MCF 10A (cell line): ENCODE measurements at regions of chr11 and their contacts with region 1.

Region 1: DNA sequence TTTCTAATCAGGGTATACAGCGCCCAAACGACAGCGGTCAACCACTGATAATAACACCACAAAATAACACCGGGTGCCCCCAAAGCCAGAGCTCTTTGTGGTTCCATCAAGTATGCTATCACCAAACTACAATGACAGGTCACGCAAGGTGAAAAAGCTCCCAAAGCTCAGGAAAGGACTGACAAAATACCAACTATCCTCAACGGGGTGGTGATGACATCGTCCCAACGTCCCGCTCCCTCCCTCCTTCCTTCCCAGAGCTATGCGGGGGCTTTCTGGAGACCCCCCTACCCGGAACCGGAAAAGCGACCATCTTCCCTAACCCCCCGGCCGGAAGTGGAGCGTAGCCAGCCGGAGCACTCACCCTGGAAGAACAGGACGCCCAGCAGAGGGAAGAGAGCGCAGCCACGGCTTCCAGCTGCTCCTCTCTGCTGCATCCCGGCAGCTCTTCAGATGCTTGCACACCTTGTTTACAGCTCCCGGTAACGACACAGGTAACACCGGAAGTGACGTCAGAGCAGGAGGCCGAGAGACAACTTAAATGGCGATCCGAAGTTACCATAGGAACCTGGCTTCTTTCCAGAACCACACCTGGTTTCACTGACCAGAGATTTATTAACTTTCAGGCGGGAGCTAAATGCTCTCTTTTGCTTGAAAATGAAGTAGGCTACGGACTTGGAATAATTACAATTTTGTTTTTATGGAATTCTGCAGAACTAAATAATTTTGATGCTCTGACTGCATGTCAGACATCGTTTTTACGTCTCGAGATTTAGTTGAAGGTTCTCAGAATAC is at the start of gene MPZL3:
- DNase-seq: peak; percentile 96
- H3K4me3 Mint-ChIP-seq: peak within 1 kb of the TSS; percentile 97
- H3K27ac Mint-ChIP-seq: peak within 1 kb of the TSS; percentile 99
- H3K4me1 Mint-ChIP-seq: peaks cover 18% of the 10 kb centered on the region
- H3K27me3 Mint-ChIP-seq: no peaks in the 10 kb centered on the region
- CTCF ChIP-seq: no peak
- total RNA-seq, gene MPZL3: 11.9 and 17.7 TPM in 2 replicates

Region 2: DNA sequence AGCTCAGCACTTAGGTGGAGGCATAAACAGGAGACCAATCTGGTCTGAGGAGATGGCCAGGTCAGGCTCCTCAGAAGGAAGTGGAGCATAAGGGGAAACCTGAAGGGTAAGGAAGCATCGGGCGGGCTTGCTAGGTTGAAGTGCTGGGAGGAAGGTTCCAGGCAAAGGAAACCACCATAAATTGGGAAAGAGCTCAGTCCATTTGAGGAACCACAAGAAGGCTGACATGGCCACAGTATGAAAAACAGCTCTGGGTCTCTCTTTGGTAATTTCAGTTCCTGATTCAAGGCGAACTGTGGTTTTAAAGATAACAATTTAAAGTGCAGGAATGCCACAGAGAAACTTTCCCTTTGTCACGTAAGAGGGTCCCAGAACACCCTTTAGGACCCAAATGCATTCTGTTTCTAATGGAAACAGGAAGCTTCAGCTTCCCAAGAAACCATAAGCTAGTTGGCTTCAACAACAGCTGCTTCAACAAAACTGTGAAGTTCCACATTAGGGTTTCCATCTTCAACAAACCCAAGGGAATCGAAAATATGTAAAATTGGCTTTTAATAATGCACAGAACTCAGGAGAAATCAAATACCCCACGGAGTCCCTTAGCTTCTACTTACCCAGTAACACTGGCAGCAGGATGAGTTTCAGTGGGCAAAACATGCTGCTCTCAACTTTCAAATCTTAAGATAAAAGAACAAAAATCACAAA is 37.7 kb before region 1 on chr11:
- CTCF ChIA-PET with region 1: no interaction called
- POLR2A ChIA-PET with region 1: interaction called, 11 read pairs
- intact Hi-C with region 1: no loop called
- DNase-seq: no peak
- H3K4me3 Mint-ChIP-seq: no peak overlapping the region
- H3K27ac Mint-ChIP-seq: no peak overlapping the region
- H3K4me1 Mint-ChIP-seq: no peaks in the 10 kb centered on the region
- H3K27me3 Mint-ChIP-seq: peaks cover 51% of the 10 kb centered on the region
- CTCF ChIP-seq: no peak

Region 3: GRCh38 chr11:118240999-118241768 is 10.9 kb before region 1 on chr11:
- CTCF ChIA-PET with region 1: interaction called, 3 read pairs
- POLR2A ChIA-PET with region 1: interaction called, 30 read pairs
- intact Hi-C with region 1: no loop called
- DNase-seq: peak; percentile 57
- H3K4me3 Mint-ChIP-seq: peak overlapping the region; percentile 35
- H3K27ac Mint-ChIP-seq: peak overlapping the region; percentile 70
- H3K4me1 Mint-ChIP-seq: peaks cover 25% of the 10 kb centered on the region
- H3K27me3 Mint-ChIP-seq: no peaks in the 10 kb centered on the region
- CTCF ChIP-seq: no peak

Region 4: DNA sequence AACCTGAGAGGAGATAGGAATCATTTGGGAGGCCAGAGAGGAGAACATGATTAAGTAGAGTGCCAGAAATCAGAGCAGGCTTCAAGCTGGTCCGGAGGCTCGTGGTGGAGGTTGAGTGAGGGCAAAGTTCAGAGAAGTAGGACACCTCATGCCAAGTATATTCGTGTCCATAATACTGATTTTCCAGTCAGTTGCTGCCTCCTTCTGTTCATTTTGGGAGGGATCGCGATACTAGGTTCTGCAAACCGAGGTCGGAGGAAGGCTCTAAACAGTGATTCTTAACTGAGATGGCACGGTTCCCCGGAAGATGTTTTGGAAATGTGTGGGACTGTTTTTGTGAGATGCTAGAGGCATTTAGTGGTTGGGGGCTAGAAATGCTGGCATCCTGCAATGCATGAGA is 38.9 kb after region 1 on chr11:
- CTCF ChIA-PET with region 1: interaction called, 4 read pairs
- POLR2A ChIA-PET with region 1: interaction called, 17 read pairs
- intact Hi-C with region 1: loop called (anchors 5 kb)
- DNase-seq: peak; percentile 75
- H3K4me3 Mint-ChIP-seq: peak overlapping the region; percentile 19
- H3K27ac Mint-ChIP-seq: no peak overlapping the region
- H3K4me1 Mint-ChIP-seq: peaks cover 19% of the 10 kb centered on the region
- H3K27me3 Mint-ChIP-seq: no peaks in the 10 kb centered on the region
- CTCF ChIP-seq: peak; percentile 43